ENCODE measurements at regions of chr13 and their contacts with region 1.

Region 1: GRCh38 chr13:46553886-46554858 is 1.2 kb downstream of the LRCH1 start:
- DNase-seq: peak; percentile 89
- H3K4me3 ChIP-seq: peak overlapping the region; percentile 91 to 98 (median 96)
- H3K27ac ChIP-seq: peak overlapping the region; percentile 88
- H3K4me1 ChIP-seq: peaks cover 13% of the 10 kb centered on the region
- H3K27me3 ChIP-seq: no peaks in the 10 kb centered on the region
- CTCF ChIP-seq: peak; percentile 3 to 31

Region 2: DNA sequence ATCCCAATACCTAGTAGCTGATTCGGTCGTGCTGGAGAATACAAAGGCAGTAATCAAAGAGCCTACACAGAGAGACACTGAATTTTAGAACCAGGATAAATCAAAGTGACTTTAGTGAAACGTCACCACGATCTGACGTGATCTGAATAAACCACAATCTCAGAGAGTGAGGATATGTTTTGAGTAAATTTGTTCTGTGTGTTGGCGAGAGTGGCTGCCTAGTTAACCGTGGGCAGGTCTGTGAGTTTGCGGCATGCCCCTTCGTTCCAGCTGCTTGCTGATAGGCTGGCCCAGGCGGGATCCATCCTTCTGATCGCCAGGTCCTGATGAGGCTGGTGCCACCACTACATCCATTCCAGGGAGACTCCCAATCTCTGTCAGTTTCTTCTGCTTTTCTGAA is 39.2 kb after region 1 on chr13:
- CTCF ChIA-PET with region 1: interaction called, 5 read pairs
- dilution Hi-C with region 1: no loop called
- in situ Hi-C with region 1: no loop called
- intact Hi-C with region 1: loop called (anchors 2 kb)
- DNase-seq: no peak
- H3K4me3 ChIP-seq: no peak overlapping the region
- H3K27ac ChIP-seq: no peak overlapping the region
- H3K4me1 ChIP-seq: peaks cover 34% of the 10 kb centered on the region
- H3K27me3 ChIP-seq: no peaks in the 10 kb centered on the region
- CTCF ChIP-seq: no peak

Region 3: DNA sequence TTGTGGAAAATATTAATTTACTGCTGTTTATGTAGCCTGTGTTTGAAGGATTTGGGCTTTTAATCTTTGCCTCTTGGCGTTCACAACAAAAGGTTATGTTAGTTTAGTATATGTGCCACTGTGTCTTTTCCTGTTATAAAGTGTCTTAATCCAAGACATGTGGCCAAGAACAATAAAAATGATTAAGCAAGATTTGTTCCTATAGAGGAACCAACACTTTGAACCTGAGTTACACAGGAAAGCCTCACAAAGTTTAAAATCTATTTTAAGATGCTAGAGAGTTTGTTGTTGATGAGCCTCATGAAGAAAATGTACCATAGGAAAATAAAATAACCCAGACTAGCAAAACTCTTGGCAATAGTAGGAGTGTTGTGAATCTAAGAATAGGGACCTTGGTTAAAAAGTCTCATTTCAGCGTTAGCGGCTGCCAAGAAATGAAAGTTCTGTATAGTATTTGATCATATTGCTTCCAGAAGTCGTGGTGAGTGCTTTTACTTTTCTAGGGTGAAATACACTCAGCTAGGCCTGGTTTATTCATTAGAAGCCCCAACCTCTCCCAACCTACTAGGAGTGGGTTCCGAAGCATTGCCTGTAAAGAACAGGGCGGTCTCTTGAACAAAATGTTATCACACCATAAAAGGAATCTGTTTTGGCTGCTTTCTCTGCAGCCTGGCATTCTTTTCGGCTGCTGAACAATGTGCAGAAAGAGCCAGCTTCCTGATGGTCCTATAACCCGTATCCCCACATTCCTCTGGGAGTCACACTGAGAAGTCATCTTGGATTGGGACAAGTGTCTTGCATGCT is 101.4 kb after region 1 on chr13:
- CTCF ChIA-PET with region 1: no interaction called
- dilution Hi-C with region 1: no loop called
- in situ Hi-C with region 1: no loop called
- intact Hi-C with region 1: loop called (anchors 5 kb)
- DNase-seq: peak; percentile 18
- H3K4me3 ChIP-seq: no peak overlapping the region
- H3K27ac ChIP-seq: peak overlapping the region; percentile 26
- H3K4me1 ChIP-seq: peaks cover 19% of the 10 kb centered on the region
- H3K27me3 ChIP-seq: no peaks in the 10 kb centered on the region
- CTCF ChIP-seq: no peak

Region 4: DNA sequence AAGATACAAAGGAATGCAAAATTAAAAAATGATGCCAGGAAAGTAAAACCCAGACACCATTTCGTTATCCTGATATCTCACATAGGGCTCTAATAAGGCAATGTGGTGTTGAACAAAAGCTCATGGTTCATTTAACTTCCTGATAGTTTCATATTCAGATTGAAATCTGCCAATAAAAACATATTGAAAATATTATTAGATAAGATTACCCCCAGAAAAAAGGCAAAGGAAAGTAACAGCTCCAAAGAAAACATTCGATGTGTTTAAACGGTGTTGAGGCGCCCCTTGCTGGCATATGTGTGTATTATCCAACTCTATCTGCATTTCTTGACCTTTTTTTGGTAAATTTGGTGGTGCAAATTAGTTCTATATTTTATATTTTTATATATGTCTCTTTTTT is 166.9 kb after region 1 on chr13:
- CTCF ChIA-PET with region 1: interaction called, 3 read pairs
- dilution Hi-C with region 1: no loop called
- in situ Hi-C with region 1: loop called (anchors 10 kb)
- intact Hi-C with region 1: loop called (anchors 1 kb)
- DNase-seq: peak; percentile 11
- H3K4me3 ChIP-seq: no peak overlapping the region
- H3K27ac ChIP-seq: no peak overlapping the region
- H3K4me1 ChIP-seq: no peaks in the 10 kb centered on the region
- H3K27me3 ChIP-seq: no peaks in the 10 kb centered on the region
- CTCF ChIP-seq: peak; percentile 54 to 59

Measured in mammary epithelial cell (primary cell).